Activated B cell treated with CpG ODN at 0.5 μM for 24 hours (primary cell): ENCODE measurements at regions of chr2 and their contacts with region 1.

Region 1: GRCh38 chr2:190648289-190649034 is 421 bp upstream of the NAB1 start:
- DNase-seq: peak; percentile 91
- ATAC-seq: peak; percentile 77
- H3K4me3 Mint-ChIP-seq: peak overlapping the region; percentile 83
- H3K27ac Mint-ChIP-seq: peak overlapping the region; percentile 79
- H3K4me1 Mint-ChIP-seq: peaks cover 22% of the 10 kb centered on the region
- H3K27me3 Mint-ChIP-seq: no peaks in the 10 kb centered on the region
- CTCF ChIP-seq: no peak

Region 2: GRCh38 chr2:189661148-189661956 is 987.1 kb before region 1 on chr2 and contains the start of gene ASNSD1:
- CTCF ChIA-PET with region 1: no interaction called
- POLR2A ChIA-PET with region 1: no interaction called
- intact Hi-C with region 1: loop called (anchors 2 kb)
- DNase-seq: peak; percentile 97
- ATAC-seq: peak; percentile 95
- H3K4me3 Mint-ChIP-seq: no peak within 1 kb of the TSS
- H3K27ac Mint-ChIP-seq: no peak within 1 kb of the TSS
- H3K4me1 Mint-ChIP-seq: peaks cover 25% of the 10 kb centered on the region
- H3K27me3 Mint-ChIP-seq: no peaks in the 10 kb centered on the region
- CTCF ChIP-seq: peak; percentile 97
- total RNA-seq, gene ASNSD1: 27.5 and 31.1 TPM in 2 replicates

Region 3: GRCh38 chr2:190486037-190486623 is 162.3 kb before region 1 on chr2:
- CTCF ChIA-PET with region 1: no interaction called
- POLR2A ChIA-PET with region 1: interaction called, 10 read pairs
- intact Hi-C with region 1: no loop called
- DNase-seq: no peak
- ATAC-seq: no peak
- H3K4me3 Mint-ChIP-seq: no peak overlapping the region
- H3K27ac Mint-ChIP-seq: no peak overlapping the region
- H3K4me1 Mint-ChIP-seq: no peaks in the 10 kb centered on the region
- H3K27me3 Mint-ChIP-seq: no peaks in the 10 kb centered on the region
- CTCF ChIP-seq: no peak

Region 4: DNA sequence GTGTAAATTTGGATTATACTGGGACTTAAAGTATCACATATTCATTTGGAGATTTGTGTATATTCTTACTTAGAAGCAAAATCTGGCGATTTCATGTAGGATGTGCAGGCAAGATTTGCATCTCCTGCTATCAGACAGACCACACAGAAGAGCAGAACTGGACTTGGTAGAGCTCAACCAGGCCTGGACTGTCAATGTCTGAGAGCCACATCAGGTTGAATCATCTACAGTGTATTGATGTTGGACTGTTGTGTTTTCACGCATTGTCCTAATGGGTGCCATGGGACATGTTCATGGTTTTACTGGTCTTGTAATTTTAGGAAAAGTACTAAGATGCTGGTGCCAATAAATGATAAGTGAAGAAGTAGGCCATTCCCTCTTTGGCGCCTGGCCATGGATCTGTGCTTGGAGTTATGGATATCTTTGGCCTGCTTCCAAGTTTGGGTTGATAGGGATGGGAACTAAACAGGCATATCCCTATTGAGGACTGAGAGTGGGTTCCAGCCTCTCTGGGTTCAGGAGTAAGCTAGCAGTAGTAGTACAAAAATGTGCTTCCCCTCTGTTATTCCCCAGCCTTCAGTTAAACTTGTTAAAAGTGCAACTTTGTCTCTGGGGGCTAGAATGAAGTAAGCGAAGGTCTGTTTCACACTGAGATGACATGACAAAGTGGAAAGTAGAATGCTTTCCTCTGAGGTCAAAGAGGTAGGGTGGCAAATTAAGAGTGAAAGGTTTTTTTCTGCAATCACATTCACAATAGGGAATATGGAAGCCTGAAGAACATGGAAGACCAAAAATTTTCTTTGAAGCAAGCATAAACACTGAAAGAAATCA is 64.7 kb before region 1 on chr2:
- CTCF ChIA-PET with region 1: no interaction called
- POLR2A ChIA-PET with region 1: no interaction called
- intact Hi-C with region 1: loop called (anchors 1 kb)
- DNase-seq: no peak
- ATAC-seq: peak; percentile 72
- H3K4me3 Mint-ChIP-seq: peak overlapping the region; percentile 62
- H3K27ac Mint-ChIP-seq: peak overlapping the region; percentile 83
- H3K4me1 Mint-ChIP-seq: peaks cover 30% of the 10 kb centered on the region
- H3K27me3 Mint-ChIP-seq: no peaks in the 10 kb centered on the region
- CTCF ChIP-seq: no peak

Region 5: GRCh38 chr2:190679813-190680591 is 31.5 kb after region 1 on chr2:
- CTCF ChIA-PET with region 1: interaction called, 5 read pairs
- POLR2A ChIA-PET with region 1: interaction called, 14 read pairs
- intact Hi-C with region 1: loop called (anchors 1 kb)
- DNase-seq: peak; percentile 49
- ATAC-seq: peak; percentile 76
- H3K4me3 Mint-ChIP-seq: peak overlapping the region; percentile 72
- H3K27ac Mint-ChIP-seq: peak overlapping the region; percentile 88
- H3K4me1 Mint-ChIP-seq: peaks cover 38% of the 10 kb centered on the region
- H3K27me3 Mint-ChIP-seq: no peaks in the 10 kb centered on the region
- CTCF ChIP-seq: peak; percentile 35

Region 6: GRCh38 chr2:191013932-191014652 is 365.6 kb after region 1 on chr2 and contains the start of gene STAT1:
- CTCF ChIA-PET with region 1: no interaction called
- POLR2A ChIA-PET with region 1: no interaction called
- intact Hi-C with region 1: loop called (anchors 5 kb)
- DNase-seq: peak; percentile 98
- ATAC-seq: peak; percentile 91
- H3K4me3 Mint-ChIP-seq: no peak within 1 kb of the TSS
- H3K27ac Mint-ChIP-seq: no peak within 1 kb of the TSS
- H3K4me1 Mint-ChIP-seq: peaks cover 29% of the 10 kb centered on the region
- H3K27me3 Mint-ChIP-seq: no peaks in the 10 kb centered on the region
- CTCF ChIP-seq: no peak
- total RNA-seq, gene STAT1: 71.2 and 85.1 TPM in 2 replicates